ENCODE measurements at regions of chr12 and their contacts with region 1.

Region 1: GRCh38 chr12:54359033-54359761 is 5.1 kb downstream of the GPR84 start:
- DNase-seq: peak; percentile 97
- H3K4me3 ChIP-seq: peak overlapping the region; percentile 59
- CTCF ChIP-seq: no peak

Region 2: DNA sequence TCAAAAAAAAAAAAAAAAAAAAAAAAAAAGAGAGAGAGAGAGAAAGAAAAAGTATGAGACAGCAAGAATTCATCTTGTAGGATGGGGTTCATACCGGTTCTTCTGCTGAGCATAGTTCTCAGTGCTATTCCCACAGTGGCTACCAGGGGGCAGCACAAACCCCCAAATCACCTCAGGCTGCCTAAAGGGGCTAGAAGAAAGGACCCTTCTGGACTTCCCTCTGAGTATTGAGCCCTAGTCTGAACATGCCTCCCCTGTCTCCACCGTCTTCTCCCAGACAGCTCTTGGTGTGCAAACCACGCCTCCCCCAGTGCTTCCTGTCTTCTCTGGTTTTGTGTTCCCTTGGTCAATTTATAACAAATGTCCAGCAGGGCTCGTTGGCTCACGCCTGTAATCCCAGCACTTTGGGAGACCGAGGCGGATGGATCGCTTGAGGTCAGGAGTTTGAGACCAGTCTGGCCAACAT is 139.1 kb before region 1 on chr12:
- CTCF ChIA-PET with region 1: interaction called, 98 read pairs
- POLR2A ChIA-PET with region 1: interaction called, 7 read pairs
- DNase-seq: no peak
- H3K4me3 ChIP-seq: no peak overlapping the region
- CTCF ChIP-seq: peak; percentile 77

Region 3: DNA sequence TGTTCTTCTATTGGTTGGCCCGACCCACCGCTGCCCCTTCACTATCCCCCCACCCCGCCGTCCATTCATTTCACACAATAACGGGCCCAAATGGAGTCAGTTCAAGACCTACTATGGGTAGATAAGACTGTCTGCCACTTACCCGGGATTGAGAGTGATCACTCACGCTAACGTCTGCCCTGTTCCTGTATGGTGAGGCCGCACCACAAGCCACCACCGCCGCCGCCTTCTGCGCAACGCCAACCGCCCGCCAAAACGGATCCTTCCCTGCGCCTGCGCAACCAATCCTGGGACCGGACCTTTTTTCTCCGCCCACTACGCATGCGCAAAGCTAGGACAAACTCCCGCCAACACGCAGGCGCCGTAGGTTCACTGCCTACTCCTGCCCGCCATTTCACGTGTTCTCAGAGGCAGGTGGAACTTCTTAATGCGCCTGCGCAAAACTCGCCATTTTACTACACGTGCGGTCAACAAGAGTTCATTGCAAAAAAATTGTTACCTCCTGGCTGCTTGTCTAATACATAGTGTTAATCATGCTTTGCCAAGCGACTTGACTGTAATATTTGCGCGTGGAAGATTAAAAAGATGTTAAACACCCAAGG is 79.2 kb before region 1 on chr12 and contains the start of gene CBX5:
- CTCF ChIA-PET with region 1: interaction called, 5 read pairs
- POLR2A ChIA-PET with region 1: interaction called, 12 read pairs
- DNase-seq: peak; percentile 83
- H3K4me3 ChIP-seq: peak within 1 kb of the TSS; percentile 92
- CTCF ChIP-seq: no peak

Region 4: GRCh38 chr12:54285150-54286041 is 73.8 kb before region 1 on chr12:
- CTCF ChIA-PET with region 1: interaction called, 131 read pairs
- POLR2A ChIA-PET with region 1: interaction called, 12 read pairs
- DNase-seq: no peak
- H3K4me3 ChIP-seq: peak overlapping the region; percentile 6; the same call in 1 of the 2 replicates
- CTCF ChIP-seq: no peak

Region 5: DNA sequence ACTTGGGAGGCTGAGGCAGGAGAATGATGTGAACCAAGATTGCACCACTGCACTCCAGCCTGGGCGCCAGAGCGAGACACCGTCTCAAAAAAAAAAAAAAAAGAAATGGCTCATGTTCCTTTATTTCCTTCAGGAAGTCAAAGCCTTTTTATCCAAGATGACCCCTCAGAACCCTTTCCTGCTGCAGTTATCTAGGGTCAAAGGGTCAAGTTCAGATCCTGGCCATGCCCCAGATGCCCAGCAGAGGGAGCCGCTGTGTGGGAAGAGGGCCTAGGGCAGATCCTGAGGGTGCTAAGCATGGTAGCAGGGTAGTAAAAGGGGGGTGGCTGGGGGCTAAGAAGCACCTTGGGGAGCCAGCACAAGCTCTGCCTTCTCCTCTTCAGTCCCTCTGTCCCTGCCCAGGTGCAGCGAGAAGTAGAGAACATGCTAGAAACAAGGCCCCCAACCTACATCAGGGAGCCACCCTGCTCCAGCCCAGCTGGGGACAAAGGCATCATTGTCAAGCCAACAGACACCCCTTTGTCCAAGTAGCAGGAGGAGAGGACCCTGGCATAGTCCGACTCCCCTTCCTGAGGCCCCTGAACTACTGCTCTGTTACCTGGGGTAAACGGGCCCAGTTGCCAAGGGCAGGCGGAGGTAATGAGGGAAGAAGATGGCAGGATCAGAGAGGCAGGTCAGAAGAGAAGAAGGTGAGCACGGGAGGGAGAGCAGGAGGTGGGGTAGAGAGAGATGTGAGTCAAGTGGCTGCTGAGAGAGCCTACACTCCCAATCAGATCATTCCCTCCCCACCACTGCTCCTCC is 64.8 kb before region 1 on chr12:
- CTCF ChIA-PET with region 1: interaction called, 131 read pairs
- POLR2A ChIA-PET with region 1: no interaction called
- DNase-seq: no peak
- H3K4me3 ChIP-seq: no peak overlapping the region
- CTCF ChIP-seq: peak; percentile 87

Region 6: GRCh38 chr12:54300732-54301427 is 58.3 kb before region 1 on chr12 and contains the start of gene NFE2:
- CTCF ChIA-PET with region 1: interaction called, 131 read pairs
- POLR2A ChIA-PET with region 1: no interaction called
- DNase-seq: no peak
- H3K4me3 ChIP-seq: peak within 1 kb of the TSS; percentile 49
- CTCF ChIP-seq: peak; percentile 23

Region 7: GRCh38 chr12:54337280-54337842 is 21.8 kb before region 1 on chr12:
- CTCF ChIA-PET with region 1: interaction called, 64 read pairs
- POLR2A ChIA-PET with region 1: interaction called, 5 read pairs
- DNase-seq: no peak
- H3K4me3 ChIP-seq: no peak overlapping the region
- CTCF ChIP-seq: no peak

Region 8: DNA sequence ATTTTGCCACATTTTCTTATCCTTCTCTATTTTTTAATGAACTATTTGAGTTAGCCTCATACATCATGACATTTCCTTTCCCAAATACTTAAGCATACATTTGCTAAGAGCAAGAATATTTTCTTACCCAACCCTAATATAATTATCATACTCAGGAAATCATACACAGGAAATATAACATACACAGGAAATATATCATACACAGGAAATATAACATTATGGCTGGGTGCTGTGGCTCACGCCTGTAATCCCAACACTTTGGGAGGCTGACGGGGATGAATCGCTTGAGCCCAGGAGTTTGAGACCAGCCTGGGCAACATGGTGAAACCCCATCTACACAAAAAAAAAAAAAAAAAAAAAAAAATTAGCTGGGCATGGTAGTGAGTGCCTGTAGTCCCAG is 143.3 kb after region 1 on chr12:
- CTCF ChIA-PET with region 1: no interaction called
- POLR2A ChIA-PET with region 1: no interaction called
- DNase-seq: no peak
- H3K4me3 ChIP-seq: no peak overlapping the region
- CTCF ChIP-seq: no peak

Region 9: DNA sequence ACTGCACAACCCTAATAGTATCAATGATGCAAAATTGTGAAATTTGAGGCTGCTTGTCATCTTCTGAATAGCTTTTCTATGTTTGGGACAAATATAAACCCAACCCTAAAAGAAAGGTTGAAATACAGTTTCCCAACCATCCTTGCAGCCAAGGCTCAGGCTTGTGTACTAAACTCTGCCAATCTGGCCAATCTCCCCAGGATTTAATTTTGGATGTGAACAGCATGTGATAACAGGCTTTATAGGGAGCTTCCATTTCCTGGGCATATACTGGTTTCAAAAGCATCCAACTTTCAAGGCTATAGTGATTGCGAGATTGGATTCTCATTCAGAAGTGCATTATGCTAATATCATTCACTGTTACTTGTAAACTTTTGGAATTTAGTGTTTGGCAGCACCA is 439.5 kb after region 1 on chr12:
- CTCF ChIA-PET with region 1: no interaction called
- POLR2A ChIA-PET with region 1: no interaction called
- DNase-seq: no peak
- H3K4me3 ChIP-seq: no peak overlapping the region
- CTCF ChIP-seq: no peak

Measured in AG04449 (cell line).